HepG2 (cell line): ENCODE measurements at regions of chr18 and their contacts with region 1.

Region 1: GRCh38 chr18:27017901-27018500 is 152.5 kb upstream of the AQP4 start:
- DNase-seq: peak; percentile 19
- ATAC-seq: peak; percentile 52; the same call in 2 of the 3 replicates
- H3K4me3 ChIP-seq: no peak overlapping the region
- H3K27ac ChIP-seq: no peak overlapping the region
- H3K4me1 ChIP-seq: peaks cover 12% of the 10 kb centered on the region
- H3K27me3 ChIP-seq: no peaks in the 10 kb centered on the region
- CTCF ChIP-seq: peak; percentile 65
- EP300 ChIP-seq: no peak
- POLR2A ChIP-seq: no peak
- RAD21 ChIP-seq: peak; percentile 64; the same call in 1 of the 2 replicates

Region 2: DNA sequence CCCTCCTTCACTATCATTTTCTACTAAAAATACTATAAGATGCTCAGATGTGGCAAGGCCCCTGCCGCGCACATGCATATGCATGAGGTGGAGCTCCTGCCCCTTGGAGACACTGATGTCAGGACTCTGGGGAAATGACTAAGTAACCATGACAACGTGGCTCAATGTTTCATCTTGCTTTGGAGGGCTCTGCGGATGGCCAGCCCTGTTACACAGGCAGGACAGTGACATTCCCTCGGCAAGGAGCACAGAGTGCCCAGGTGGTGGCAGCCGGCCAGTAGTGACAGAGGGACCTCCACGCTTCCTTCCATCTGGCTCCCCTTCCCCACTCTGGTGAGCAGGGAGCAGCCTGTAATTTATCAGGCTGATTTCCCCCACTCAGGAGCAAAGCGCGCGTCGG is 1291.7 kb before region 1 on chr18:
- CTCF ChIA-PET with region 1: no interaction called
- POLR2A ChIA-PET with region 1: no interaction called
- in situ Hi-C with region 1: no loop called
- intact Hi-C with region 1: no loop called
- DNase-seq: no peak
- ATAC-seq: no peak
- H3K4me3 ChIP-seq: no peak overlapping the region
- H3K27ac ChIP-seq: no peak overlapping the region
- H3K4me1 ChIP-seq: no peaks in the 10 kb centered on the region
- H3K27me3 ChIP-seq: no peaks in the 10 kb centered on the region; a peak in 1 of 5 replicates
- CTCF ChIP-seq: no peak
- EP300 ChIP-seq: no peak
- POLR2A ChIP-seq: no peak
- RAD21 ChIP-seq: no peak

Region 3: GRCh38 chr18:27164905-27165304 is 146.9 kb after region 1 on chr18:
- CTCF ChIA-PET with region 1: no interaction called
- POLR2A ChIA-PET with region 1: no interaction called
- in situ Hi-C with region 1: no loop called
- intact Hi-C with region 1: loop called (anchors 1 kb)
- DNase-seq: no peak
- ATAC-seq: no peak
- H3K4me3 ChIP-seq: no peak overlapping the region
- H3K27ac ChIP-seq: no peak overlapping the region
- H3K4me1 ChIP-seq: no peaks in the 10 kb centered on the region
- H3K27me3 ChIP-seq: no peaks in the 10 kb centered on the region
- CTCF ChIP-seq: no peak
- EP300 ChIP-seq: no peak
- POLR2A ChIP-seq: no peak
- RAD21 ChIP-seq: no peak

Region 4: GRCh38 chr18:27181726-27182125 is 163.7 kb after region 1 on chr18:
- CTCF ChIA-PET with region 1: no interaction called
- POLR2A ChIA-PET with region 1: no interaction called
- in situ Hi-C with region 1: no loop called
- intact Hi-C with region 1: no loop called
- DNase-seq: no peak
- ATAC-seq: no peak
- H3K4me3 ChIP-seq: no peak overlapping the region
- H3K27ac ChIP-seq: no peak overlapping the region
- H3K4me1 ChIP-seq: peaks cover 7% of the 10 kb centered on the region; the same call in 1 of the 2 replicates
- H3K27me3 ChIP-seq: peaks cover 4 to 16% of the 10 kb centered on the region in 2 experiments; a peak in 4 of 5 replicates
- CTCF ChIP-seq: no peak
- EP300 ChIP-seq: no peak
- POLR2A ChIP-seq: no peak
- RAD21 ChIP-seq: no peak

Region 5: GRCh38 chr18:27298214-27298804 is 280.3 kb after region 1 on chr18:
- CTCF ChIA-PET with region 1: interaction called, 9 read pairs
- POLR2A ChIA-PET with region 1: no interaction called
- in situ Hi-C with region 1: no loop called
- intact Hi-C with region 1: loop called (anchors 1 kb)
- DNase-seq: peak; percentile 13
- ATAC-seq: peak; percentile 62
- H3K4me3 ChIP-seq: no peak overlapping the region
- H3K27ac ChIP-seq: no peak overlapping the region
- H3K4me1 ChIP-seq: no peaks in the 10 kb centered on the region
- H3K27me3 ChIP-seq: no peaks in the 10 kb centered on the region; a peak in 1 of 5 replicates
- CTCF ChIP-seq: peak; percentile 57
- EP300 ChIP-seq: no peak
- POLR2A ChIP-seq: no peak
- RAD21 ChIP-seq: no peak